Panc1 (cell line): ENCODE measurements at regions of chr22 and their contacts with region 1.

Region 1: DNA sequence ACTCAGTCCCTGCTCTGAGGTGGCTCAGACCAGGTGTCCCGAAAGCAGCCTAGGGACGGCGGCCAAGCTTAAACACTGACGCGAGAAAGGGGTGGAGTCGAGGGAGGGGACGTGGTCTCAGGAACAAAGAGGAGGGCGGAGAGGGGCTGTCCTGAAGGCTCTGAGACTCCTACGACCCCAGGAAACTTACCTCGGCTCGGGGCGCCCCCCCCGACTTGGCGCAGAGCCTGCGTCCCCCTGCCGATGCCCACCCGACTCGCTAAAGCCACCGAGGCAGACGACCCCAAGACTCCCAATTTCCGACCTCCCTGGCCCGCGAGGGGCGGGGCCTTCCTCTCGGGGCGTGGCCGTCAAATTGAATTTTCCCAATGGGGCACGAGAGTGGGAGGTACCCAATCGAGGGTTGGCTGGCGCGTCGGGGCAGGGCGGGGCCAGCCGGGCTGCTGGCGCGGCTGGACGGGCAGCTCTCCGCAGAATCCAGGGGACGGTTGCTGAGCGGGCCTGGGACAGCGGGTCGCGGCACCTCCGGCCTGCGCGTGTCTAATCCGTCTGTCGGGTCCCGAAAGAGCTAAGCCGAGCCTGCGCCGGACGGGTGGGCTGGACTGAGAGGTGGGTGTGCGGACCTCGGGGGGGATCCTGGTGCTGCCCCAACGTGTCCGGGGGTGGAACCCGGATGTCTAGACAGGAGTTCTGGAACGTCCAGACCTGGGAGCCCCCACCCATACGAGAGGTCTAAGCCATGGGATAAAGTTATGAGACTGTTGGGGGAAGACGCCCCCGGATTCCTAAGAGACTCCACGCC is at the start of gene SMTN:
- DNase-seq: no peak
- ATAC-seq: peak; percentile 85
- H3K4me3 ChIP-seq: peak within 1 kb of the TSS; percentile 73 to 79
- H3K27ac ChIP-seq: peak within 1 kb of the TSS; percentile 76
- H3K4me1 ChIP-seq: peaks cover 16% of the 10 kb centered on the region
- H3K27me3 ChIP-seq: no peaks in the 10 kb centered on the region
- CTCF ChIP-seq: no peak
- total RNA-seq, gene SMTN: 71.7 TPM

Region 2: DNA sequence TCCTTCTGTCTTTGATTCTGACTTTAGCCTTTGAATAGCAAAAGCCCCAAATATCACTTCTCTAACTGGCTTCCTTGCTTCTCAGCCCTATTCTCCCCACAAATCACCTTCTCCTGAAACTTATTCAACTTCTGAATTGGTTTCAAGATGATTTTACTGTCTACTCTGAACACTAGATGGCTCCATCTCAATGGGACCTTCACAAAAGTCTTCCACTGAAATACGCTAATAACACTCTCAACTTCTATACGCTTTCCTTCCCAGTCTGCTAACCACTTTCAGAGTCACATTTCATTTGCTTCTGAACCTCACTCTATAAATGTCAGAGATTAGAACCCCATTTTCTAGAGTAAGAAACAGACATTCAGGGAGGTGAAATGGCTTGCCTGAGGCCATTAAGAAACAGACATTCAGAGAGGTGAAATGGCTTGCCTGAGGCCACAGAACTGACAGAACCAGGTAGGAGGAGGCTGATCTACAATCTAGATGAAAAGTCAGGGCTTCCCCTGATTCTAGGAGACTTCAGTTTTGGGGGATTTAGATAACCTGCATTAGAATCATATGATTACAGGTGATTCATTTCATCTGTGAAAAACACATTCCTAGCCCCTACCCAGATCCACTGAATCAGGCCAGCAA is 133.1 kb before region 1 on chr22:
- CTCF ChIA-PET with region 1: no interaction called
- POLR2A ChIA-PET with region 1: interaction called, 3 read pairs
- in situ Hi-C with region 1: no loop called
- intact Hi-C with region 1: loop called (anchors 5 kb)
- DNase-seq: no peak
- ATAC-seq: no peak
- H3K4me3 ChIP-seq: no peak overlapping the region
- H3K27ac ChIP-seq: no peak overlapping the region
- H3K4me1 ChIP-seq: no peaks in the 10 kb centered on the region
- H3K27me3 ChIP-seq: no peaks in the 10 kb centered on the region
- CTCF ChIP-seq: peak; percentile 46; the same call in 1 of the 2 replicates

Region 3: DNA sequence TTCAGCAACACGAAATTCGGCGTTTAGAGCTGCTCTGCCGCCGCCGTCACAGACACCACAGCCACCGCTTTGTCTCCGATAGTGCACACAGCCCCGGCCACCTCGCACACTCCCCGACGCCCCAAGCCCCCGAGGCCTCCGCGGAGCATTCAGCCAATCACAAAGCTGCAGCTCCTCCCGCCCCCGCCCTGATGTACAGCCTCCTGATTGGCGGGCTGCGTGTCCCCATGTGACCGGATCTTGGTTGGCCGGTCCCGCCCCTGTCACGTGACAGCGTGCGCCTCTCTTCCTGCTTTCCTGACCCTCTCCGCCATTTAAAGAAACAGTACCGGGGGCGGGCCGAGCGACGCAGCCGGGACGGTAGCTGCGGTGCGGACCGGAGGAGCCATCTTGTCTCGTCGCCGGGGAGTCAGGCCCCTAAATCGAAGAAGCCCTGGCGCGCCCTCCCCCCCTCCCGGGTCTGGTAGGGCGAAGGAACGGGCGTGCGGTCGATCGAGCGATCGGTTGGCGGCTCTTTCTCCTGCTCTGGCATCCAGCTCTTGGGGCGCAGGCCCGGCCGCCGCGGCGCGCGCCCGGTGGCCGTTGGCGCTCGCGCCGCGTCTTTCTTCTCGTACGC is 112.0 kb before region 1 on chr22 and contains the start of gene TUG1:
- CTCF ChIA-PET with region 1: no interaction called
- POLR2A ChIA-PET with region 1: interaction called, 3 read pairs
- in situ Hi-C with region 1: no loop called
- intact Hi-C with region 1: loop called (anchors 2 kb)
- DNase-seq: peak; percentile 71
- ATAC-seq: peak; percentile 96
- H3K4me3 ChIP-seq: peak within 1 kb of the TSS; percentile 68 to 92
- H3K27ac ChIP-seq: peak within 1 kb of the TSS; percentile 91
- H3K4me1 ChIP-seq: peaks cover 14% of the 10 kb centered on the region; the same call in 1 of the 2 replicates
- H3K27me3 ChIP-seq: no peaks in the 10 kb centered on the region
- CTCF ChIP-seq: no peak
- total RNA-seq, gene TUG1: 69.8 TPM

Region 4: DNA sequence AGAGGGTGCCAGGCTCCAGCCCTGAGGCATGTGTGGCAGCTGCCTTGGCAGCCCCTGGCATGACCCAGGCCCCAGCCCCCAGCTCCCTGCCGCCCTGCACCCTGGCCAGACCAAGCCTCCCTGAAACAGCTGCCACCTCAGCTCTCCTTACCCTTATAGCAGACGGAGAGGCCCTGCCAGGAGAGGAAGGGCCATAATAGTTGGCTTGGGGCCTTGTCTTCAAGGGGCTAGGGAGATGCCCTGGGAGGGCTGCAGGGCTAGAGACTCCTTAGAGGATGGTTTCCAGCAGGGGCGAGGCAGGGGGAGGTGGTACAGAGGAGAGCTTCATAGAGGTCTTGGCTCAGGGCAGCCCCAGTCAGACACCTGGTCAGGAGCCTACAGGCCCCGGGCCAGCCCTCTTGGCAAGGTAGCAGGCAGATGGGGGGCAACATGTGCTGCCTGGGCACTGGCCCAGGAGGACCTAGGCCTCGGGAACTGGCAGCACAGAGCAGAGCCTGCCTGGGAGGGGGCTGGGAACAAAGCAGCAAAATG is 13.0 kb after region 1 on chr22:
- CTCF ChIA-PET with region 1: no interaction called
- POLR2A ChIA-PET with region 1: interaction called, 10 read pairs
- in situ Hi-C with region 1: no loop called
- intact Hi-C with region 1: no loop called
- DNase-seq: no peak
- ATAC-seq: no peak
- H3K4me3 ChIP-seq: no peak overlapping the region
- H3K27ac ChIP-seq: no peak overlapping the region
- H3K4me1 ChIP-seq: no peaks in the 10 kb centered on the region
- H3K27me3 ChIP-seq: no peaks in the 10 kb centered on the region
- CTCF ChIP-seq: no peak

Region 5: DNA sequence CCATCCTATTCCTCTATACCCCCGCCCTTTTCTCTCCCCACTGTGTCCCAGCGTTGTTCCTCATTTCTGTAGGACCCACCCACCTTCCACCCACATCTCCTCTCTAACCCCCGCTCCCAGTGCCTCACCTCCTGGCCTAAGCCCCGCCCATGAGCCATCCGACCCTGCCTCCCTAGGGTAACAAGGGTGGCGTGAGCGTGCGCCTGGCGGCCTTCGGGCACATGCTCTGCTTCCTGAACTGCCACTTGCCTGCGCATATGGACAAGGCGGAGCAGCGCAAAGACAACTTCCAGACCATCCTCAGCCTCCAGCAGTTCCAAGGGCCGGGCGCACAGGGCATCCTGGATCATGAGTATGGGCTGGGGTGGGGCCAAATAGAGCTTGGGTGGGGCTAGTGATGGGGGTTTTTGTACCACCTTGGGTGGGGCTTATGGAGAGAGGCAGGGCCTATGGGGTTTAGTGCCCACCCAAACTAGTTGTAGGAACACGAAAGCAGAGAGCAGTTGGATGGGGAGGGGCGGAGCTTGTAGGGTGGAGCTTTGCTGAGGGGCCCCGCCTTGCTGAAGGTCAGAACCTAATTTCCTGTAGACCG is 46.2 kb after region 1 on chr22:
- CTCF ChIA-PET with region 1: interaction called, 12 read pairs
- POLR2A ChIA-PET with region 1: no interaction called
- in situ Hi-C with region 1: no loop called
- intact Hi-C with region 1: no loop called
- DNase-seq: no peak
- ATAC-seq: no peak
- H3K4me3 ChIP-seq: no peak overlapping the region
- H3K27ac ChIP-seq: no peak overlapping the region
- H3K4me1 ChIP-seq: no peaks in the 10 kb centered on the region
- H3K27me3 ChIP-seq: no peaks in the 10 kb centered on the region
- CTCF ChIP-seq: no peak